Activated T-helper 1 cell treated with anti-CD3 and anti-CD28 coated beads, Interleukin-12 subunit alpha, Interleukin-12 subunit beta, Interleukin-2, Interleukin-4 antibody, amounts not matched to agents 30 ng/mL and 10 ng/mL and 1 ng/mL, durations not matched to agents 14 hours and 24 hours and 36 hours (primary cell): ENCODE measurements at regions of chr19 and their contacts with region 1.

Region 1: DNA sequence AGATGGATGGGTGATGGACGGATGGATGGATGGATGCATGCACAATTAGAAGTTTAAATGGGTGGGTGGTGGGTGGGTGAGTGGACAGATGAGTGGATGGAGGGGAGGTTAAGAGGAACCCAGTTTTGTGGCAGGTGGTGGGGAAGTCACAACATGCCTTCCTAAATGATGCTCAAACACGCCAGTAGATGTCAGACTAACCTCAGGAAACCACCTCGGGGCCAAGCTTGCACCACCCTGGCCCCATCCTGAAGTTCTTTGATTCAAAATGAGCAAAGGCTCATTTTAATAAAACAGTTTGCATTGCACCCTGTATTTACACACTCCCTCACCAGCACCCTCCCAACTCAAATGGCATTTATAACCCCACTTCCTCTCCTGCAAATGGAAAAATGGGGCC is 91.4 kb upstream of the CACNA1A start:
- DNase-seq: peak; percentile 34
- H3K4me3 Mint-ChIP-seq: no peak overlapping the region
- H3K27ac Mint-ChIP-seq: no peak overlapping the region
- H3K4me1 Mint-ChIP-seq: peaks cover 4% of the 10 kb centered on the region
- H3K27me3 Mint-ChIP-seq: no peaks in the 10 kb centered on the region

Region 2: DNA sequence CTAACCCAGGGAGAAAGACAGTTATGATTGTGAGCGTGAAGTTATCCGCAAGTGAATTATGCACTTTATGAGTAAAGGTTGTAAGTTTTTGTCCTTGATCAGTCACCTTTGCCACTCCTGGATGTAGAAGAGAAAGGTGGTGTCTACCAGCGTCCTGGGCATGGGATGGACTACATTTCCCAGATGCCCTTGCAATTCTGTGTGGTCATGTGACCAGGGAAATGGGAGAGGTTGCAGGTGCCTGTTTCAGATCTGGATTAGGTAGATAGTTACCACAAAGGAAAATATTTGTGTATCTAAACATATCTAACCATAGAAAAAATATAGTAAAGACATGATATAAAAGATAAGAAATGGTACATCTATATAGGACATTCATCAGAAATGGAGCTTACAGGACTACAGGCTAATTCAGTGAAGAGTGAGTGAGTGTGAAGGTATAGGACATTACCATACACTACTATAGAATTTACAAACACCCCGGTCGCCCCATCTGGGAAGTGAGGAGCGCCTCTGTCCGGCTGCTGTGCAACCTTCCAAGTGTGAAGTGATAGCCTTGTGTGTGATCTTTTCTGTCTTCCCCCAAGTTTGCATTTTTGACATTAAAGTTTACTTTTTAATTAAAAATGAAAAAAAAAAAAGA is 39.8 kb before region 1 on chr19:
- intact Hi-C with region 1: no loop called
- DNase-seq: no peak
- H3K4me3 Mint-ChIP-seq: no peak overlapping the region
- H3K27ac Mint-ChIP-seq: no peak overlapping the region
- H3K4me1 Mint-ChIP-seq: no peaks in the 10 kb centered on the region
- H3K27me3 Mint-ChIP-seq: no peaks in the 10 kb centered on the region

Region 3: GRCh38 chr19:13718733-13719132 is 121.1 kb after region 1 on chr19:
- intact Hi-C with region 1: loop called (anchors 1 kb)
- DNase-seq: no peak
- H3K4me3 Mint-ChIP-seq: no peak overlapping the region
- H3K27ac Mint-ChIP-seq: no peak overlapping the region
- H3K4me1 Mint-ChIP-seq: no peaks in the 10 kb centered on the region
- H3K27me3 Mint-ChIP-seq: peaks cover 13% of the 10 kb centered on the region